Posterior vena cava (tissue), 2 donors: ENCODE measurements at regions of chr1 and their contacts with region 1.

Region 1: GRCh38 chr1:65467536-65467935 is 47.1 kb downstream of the LEPR start:
- DNase-seq: no peak

Region 2: DNA sequence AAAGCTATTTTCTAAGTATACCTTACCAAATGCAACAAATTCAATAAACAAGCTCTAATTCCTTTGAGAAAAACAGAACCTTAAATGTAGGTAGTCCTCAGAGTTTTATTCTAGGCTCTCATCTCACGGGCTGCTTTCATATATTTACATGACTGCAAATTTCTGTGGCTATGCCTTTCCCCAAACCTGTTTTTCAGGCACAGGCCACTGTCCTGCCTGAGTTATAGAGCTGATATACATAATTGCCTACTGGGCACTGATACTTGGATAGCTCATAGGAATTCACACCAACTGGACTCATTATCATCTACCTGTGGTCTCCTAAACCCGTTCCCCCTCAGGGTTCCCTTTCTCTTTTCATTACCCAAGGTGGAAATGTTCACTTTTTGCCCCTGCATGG is 743.8 kb before region 1 on chr1:
- intact Hi-C with region 1: loop called in 1 of 2 experiments (anchors 5 kb)
- DNase-seq: no peak

Region 3: GRCh38 chr1:64940025-64940424 is 527.5 kb before region 1 on chr1:
- intact Hi-C with region 1: loop called in 1 of 2 experiments (anchors 5 kb)
- DNase-seq: no peak

Region 4: DNA sequence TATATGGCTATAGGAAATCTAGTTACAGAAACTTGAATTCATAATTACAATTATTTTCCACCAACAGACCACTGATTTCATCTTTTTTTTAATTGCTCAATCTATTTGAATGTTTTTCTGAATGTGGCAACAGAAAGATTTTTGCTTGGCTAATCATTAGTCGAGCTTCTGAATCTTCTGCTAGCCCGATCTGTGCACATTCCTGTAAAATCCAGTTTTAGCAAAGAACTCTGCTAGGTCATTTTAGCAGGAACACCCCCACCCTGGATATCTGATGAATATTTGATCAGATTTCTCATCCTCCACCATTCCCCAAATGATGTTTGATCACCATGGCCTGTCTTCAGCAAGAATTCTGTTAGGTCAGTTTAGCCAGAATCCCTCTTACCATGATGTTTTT is 129.2 kb after region 1 on chr1:
- intact Hi-C with region 1: no loop called
- DNase-seq: no peak

Region 5: DNA sequence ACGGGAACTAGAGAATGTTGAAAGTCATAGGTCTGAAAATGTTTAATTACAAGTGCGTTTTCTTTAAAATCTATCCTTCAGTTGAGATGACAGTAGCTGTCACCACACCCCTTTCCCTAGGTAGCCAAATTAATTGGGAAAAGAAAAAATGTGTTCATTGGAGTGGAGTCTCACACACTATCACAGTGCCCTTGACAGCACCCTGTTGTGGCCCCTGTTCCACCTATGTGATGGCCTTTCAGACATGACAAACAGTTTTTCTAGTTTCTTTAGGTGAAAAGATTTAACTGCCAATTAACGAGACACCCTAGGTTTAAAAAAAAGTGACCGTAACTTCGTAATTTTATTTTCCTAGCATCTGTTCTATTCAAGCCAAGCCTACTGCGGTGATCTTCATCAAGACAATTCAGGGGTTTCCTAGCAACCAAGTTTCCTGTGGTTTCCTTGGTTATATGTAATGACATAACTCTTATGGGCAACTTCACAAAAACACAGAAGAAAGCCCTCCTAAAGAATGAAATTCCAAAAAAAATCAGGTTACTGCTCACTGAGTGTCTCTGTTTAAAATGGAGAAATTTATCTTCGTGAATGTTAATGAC is 623.4 kb after region 1 on chr1:
- intact Hi-C with region 1: no loop called
- DNase-seq: no peak